Vagina (tissue), 2 donors: ENCODE measurements at regions of chr3 and their contacts with region 1.

Region 1: DNA sequence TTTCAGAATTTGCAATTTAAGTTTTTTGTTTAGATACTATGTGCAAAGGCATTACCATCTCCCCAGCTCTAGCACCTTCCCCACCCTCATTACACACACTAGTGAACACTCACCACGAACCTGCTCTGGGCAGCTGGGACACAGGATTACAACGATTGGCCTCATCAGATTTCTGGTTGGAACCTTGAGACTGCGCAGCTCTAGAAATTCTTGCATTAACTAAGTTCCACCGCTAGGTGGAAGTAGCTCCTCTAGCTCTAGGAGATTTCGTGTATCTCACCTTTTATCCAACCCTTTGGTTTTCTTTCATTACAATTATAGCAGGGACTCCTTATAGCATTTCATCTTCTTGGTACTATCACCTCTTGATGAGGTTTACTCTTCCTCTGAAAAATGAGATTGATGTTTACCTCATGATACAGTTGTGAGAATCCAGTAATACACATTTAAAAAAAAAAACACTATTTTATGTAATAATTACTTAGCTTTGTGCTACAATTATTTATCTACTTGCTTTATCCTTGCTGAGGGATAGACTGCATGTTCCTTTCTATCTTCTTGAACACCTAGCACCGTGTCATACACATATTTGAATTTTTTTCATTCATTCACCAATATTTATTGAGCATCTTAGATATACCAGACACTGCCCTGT is 28.7 kb upstream of the PLOD2 start:
- DNase-seq: no peak
- H3K4me3 ChIP-seq: no peak overlapping the region
- H3K27ac ChIP-seq: no peak overlapping the region
- H3K4me1 ChIP-seq: peaks cover 4% of the 10 kb centered on the region
- H3K27me3 ChIP-seq: no peaks in the 10 kb centered on the region
- CTCF ChIP-seq: peak in 2 of 3 experiments; percentile 54 to 59
- POLR2A ChIP-seq: no peak

Region 2: DNA sequence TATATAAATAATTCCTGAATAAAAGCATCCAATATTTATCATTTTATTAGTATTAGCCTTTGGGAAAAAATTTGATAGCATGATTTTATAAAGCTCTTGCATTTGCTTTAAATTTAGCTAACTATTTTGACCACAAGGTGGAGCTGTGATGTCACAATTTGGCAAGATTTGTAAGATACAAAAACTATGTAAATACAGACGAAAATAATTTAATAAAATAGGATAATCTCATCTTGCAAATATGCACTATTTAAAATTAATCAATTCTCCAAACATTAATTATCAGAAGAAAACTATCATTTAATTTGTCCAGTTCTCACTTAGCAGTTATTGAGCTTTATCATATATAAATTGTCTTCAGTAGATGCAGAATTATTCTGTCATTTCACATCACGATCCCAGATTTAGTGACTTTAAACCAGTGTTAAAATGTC is 124.1 kb before region 1 on chr3:
- intact Hi-C with region 1: loop called (anchors 5 kb)
- DNase-seq: no peak
- H3K4me3 ChIP-seq: no peak overlapping the region
- H3K27ac ChIP-seq: no peak overlapping the region
- H3K4me1 ChIP-seq: peaks cover 4% of the 10 kb centered on the region
- H3K27me3 ChIP-seq: no peaks in the 10 kb centered on the region
- CTCF ChIP-seq: peak; percentile 47 to 75 (median 47)
- POLR2A ChIP-seq: no peak

Region 3: DNA sequence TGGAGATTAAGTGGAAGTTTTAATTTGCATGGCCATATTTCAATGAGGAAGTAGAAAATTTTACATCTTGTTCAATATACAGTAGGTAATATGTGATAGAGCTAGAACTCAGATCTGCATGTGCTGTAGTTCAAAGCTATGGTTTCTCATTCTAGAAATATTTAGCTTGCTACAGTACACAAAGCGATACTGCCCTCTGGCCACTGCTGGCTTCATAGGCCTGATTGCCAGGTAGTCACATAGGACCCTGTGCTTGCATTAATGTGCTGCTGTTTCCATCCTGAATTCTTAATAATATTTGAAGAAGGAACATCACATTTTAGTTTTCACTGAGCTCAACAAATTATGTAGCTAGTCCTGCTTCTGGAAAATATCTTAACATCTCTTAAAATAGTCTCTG is 192.7 kb after region 1 on chr3:
- intact Hi-C with region 1: no loop called
- DNase-seq: no peak
- H3K4me3 ChIP-seq: no peak overlapping the region
- H3K27ac ChIP-seq: no peak overlapping the region
- H3K4me1 ChIP-seq: no peaks in the 10 kb centered on the region
- H3K27me3 ChIP-seq: no peaks in the 10 kb centered on the region
- CTCF ChIP-seq: no peak
- POLR2A ChIP-seq: no peak